PC-9 (cell line): ENCODE measurements at regions of chr19 and their contacts with region 1.

Region 1: DNA sequence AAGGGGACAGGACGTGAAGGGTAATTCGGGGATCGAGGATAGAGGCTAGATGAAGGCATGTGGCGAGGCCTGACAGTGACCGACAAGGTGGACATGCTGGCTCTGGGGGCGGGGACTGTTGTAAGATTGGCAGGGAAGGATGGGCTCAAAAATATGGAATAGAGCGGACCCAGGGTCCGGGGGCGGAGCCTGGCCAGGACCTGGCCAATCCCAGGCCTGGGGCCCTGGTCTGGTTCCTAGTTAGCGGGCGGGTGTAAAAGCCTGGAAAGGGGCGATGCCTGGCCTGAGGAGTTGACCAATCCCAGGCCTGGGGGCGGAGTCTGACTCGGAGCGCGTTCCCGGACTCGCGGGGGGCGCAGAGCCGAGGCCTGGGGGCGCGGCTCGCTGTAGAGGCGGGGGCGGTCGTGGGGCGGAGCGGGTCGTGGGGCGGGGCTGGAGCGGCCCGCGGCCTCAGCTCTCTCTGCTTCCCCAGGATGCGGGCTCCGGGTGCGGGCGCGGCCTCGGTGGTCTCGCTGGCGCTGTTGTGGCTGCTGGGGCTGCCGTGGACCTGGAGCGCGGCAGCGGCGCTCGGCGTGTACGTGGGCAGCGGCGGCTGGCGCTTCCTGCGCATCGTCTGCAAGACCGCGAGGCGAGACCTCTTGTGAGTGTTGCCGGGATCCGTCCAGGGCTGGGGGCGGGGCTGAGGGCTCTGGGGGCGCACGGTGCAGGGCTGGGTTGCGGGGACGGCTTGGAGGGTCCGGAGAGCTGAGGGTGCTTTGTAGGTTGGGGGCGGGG is at the start of gene SLC27A1:
- DNase-seq: peak; percentile 98 to 99
- H3K4me3 ChIP-seq: peak within 1 kb of the TSS; percentile 88
- H3K27ac ChIP-seq: peak within 1 kb of the TSS; percentile 71
- H3K4me1 ChIP-seq: peaks cover 31% of the 10 kb centered on the region
- H3K27me3 ChIP-seq: no peaks in the 10 kb centered on the region
- CTCF ChIP-seq: no peak
- total RNA-seq, gene SLC27A1: 30.8 and 40.2 TPM in 2 replicates

Region 2: DNA sequence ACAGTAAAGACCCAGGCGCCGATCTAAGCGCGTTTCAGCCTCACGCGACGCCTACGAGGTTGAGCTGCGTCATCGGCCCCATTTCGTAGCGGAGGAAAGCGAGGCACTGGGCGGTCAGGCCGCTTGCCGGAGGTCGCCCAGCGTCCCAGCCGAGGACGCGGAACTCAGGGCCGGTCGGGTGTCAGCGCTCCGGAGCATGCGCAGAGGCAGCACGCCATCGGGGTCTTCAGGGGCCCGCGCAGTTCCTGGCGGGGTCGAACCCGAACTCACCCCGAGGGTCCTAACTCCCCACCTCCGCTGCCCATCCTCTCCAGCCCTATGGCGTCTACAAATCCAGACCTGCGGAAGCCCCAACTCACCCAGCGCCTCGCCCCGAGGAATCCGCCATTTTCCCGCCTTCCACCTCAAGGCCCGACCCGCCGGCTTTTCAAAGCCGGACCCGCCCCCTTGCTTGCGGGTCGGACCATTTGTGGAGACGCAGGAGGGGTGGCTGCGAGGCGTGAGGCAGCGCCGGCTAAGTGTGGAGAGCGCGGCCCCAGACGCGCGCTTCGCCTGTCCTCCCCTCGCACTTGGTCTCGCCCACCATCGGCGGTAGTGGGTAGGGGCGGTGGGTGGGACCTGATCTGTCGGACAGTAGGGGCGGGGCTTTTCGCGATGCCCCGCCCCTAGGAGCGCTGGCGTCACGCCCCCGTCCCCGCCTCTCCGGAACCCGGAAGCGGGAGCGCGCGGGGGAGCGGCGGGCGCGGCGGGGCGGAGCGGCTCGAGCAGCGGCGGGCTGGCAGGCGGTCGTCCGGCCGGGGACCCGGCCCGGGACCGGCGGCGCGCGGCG is 395.0 kb before region 1 on chr19 and contains the starts of genes HAUS8 and MYO9B:
- CTCF ChIA-PET with region 1: interaction called, 3 read pairs
- POLR2A ChIA-PET with region 1: no interaction called
- intact Hi-C with region 1: loop called (anchors 5 kb)
- DNase-seq: peak; percentile 97 to 99
- H3K4me3 ChIP-seq: peak within 1 kb of the TSS; percentile 86
- H3K27ac ChIP-seq: peak within 1 kb of the TSS; percentile 47
- H3K4me1 ChIP-seq: peaks cover 46% of the 10 kb centered on the region
- H3K27me3 ChIP-seq: no peaks in the 10 kb centered on the region
- CTCF ChIP-seq: no peak
- total RNA-seq, gene HAUS8: 26.5 and 30.8 TPM in 2 replicates
- total RNA-seq, gene MYO9B: 81.2 and 103 TPM in 2 replicates

Region 3: DNA sequence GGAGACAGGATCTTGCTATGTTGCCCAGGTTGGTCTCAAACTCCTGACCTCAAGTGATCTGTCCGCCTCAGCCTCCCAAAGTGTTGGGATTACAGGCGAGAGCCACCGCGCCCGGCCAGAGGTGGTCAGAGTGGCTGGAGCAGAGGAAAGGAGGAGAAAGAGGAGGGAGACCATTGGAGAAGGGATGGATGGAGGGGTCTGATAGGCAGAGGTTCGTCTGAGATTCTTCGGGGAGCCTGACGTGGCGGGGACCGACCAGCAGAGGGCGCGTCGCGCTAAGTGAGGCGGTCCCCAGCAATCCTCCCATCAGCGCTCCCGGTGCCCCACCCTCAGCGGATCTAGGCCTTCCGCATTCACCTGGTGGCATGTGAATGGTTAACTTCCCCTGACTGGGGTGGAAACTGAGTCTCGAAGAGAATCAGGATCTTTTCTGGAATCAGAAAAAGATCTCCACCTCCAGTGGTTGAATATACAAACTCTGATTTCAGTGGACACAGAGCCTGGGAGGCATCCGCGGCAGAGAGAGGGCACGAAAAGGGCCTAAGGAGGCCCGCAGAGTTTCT is 124.1 kb before region 1 on chr19:
- CTCF ChIA-PET with region 1: no interaction called
- POLR2A ChIA-PET with region 1: no interaction called
- intact Hi-C with region 1: loop called (anchors 1 kb)
- DNase-seq: peak in 1 of 2 experiments; percentile 79
- H3K4me3 ChIP-seq: no peak overlapping the region
- H3K27ac ChIP-seq: no peak overlapping the region
- H3K4me1 ChIP-seq: peaks cover 10% of the 10 kb centered on the region
- H3K27me3 ChIP-seq: no peaks in the 10 kb centered on the region
- CTCF ChIP-seq: peak; percentile 94

Region 4: DNA sequence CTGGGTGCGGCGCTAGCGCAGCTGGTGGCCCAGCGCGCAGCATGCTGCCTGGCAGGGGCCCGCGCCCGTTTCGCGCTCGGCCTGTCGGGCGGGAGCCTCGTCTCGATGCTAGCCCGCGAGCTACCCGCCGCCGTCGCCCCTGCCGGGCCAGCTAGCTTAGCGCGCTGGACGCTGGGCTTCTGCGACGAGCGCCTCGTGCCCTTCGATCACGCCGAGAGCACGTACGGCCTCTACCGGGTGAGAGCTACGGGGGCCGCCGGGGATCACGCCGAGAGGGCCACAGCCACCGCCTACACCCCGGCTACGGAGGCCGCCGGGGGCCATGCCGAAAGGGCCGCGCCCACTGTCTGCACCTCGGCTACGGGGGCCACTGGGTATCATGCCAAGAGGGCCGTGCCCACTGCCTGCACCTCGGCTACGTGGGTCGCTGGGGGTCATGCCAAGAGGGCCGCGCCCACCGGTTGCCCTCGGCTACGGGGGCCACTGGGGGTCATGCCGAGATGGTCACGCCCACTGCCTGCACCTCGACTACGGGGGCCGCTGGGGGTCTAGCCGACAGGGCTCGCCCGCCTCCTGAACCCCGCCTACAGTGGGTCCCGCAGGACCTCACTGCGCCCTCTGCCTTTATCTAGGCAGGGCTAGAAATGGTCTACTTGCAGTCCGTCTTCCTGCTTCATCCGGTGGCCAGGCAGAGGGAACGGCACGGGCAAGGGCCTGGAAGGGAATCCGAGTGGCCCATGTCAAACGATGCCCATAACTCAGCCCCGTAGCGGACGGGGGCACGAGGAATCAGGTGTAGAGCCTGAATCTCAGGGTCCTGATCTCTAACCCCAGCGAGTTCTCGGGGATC is 41.7 kb after region 1 on chr19:
- CTCF ChIA-PET with region 1: no interaction called
- POLR2A ChIA-PET with region 1: no interaction called
- intact Hi-C with region 1: loop called (anchors 2 kb)
- DNase-seq: peak; percentile 55 to 78
- H3K4me3 ChIP-seq: peak overlapping the region; percentile 88
- H3K27ac ChIP-seq: peak overlapping the region; percentile 98
- H3K4me1 ChIP-seq: peaks cover 42% of the 10 kb centered on the region
- H3K27me3 ChIP-seq: no peaks in the 10 kb centered on the region
- CTCF ChIP-seq: no peak

Region 5: DNA sequence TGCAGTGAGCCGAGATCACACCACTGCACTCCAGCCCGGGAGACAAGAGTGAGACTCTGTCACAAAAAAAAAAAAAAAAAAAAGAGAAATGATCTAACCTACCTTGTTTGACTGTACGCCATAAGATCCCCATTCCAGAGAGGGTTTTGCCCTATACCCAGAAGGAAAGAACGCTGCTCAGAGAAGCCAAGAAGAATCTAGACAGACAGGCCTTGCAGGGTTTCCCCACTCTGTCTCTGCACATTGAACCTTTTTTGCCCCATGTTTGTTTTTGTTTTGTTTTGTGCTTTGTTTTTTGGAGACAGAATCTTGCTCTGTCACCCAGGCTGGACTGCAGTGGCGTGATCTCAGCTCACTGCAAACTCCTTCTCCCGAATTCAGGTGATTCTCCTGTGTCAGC is 241.6 kb after region 1 on chr19:
- CTCF ChIA-PET with region 1: no interaction called
- POLR2A ChIA-PET with region 1: no interaction called
- intact Hi-C with region 1: loop called (anchors 5 kb)
- DNase-seq: peak; percentile 69 to 92
- H3K4me3 ChIP-seq: no peak overlapping the region
- H3K27ac ChIP-seq: peak overlapping the region; percentile 69
- H3K4me1 ChIP-seq: peaks cover 16% of the 10 kb centered on the region
- H3K27me3 ChIP-seq: no peaks in the 10 kb centered on the region
- CTCF ChIP-seq: no peak

Region 6: DNA sequence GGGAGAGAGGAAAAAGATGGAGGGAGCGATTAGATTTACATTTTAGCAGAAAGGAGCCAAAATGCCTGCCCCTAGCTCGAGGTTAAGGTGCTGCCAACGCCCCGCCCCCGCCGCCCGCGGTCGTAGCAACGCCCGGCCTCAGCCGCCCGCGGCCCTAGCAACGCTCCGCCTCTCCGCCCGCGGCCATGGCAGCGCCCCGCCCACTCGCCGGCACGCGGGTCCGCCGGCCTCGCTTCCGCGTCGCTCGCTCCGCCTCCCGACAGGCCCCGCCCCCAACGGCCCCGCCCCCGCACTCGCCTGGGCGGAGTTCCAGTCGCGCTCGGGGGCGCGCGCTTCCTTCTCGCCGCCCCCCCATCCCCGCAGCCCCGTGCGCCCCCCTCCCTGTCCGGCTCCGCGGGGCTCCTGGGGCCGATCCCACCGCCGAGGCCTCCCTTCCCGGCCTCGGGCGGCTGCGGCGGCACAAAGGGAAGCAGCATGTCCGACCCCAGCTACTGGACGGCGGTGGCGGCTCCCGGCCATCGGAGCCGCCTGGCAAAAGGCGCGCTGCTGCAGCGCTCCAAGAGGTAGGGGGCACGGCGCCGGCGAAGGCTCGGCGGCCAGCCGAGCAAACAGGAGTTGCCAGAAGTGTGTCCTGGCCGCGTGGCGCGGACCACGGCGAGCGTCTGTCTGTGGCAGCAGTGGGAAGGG is 647.6 kb after region 1 on chr19:
- CTCF ChIA-PET with region 1: no interaction called
- POLR2A ChIA-PET with region 1: no interaction called
- intact Hi-C with region 1: no loop called
- DNase-seq: peak; percentile 60 to 95
- H3K4me3 ChIP-seq: peak overlapping the region; percentile 64
- H3K27ac ChIP-seq: no peak overlapping the region
- H3K4me1 ChIP-seq: peaks cover 9% of the 10 kb centered on the region; the same call in 1 of the 2 replicates
- H3K27me3 ChIP-seq: no peaks in the 10 kb centered on the region
- CTCF ChIP-seq: no peak